ENCODE measurements at regions of chr1 and their contacts with region 1.

Region 1: DNA sequence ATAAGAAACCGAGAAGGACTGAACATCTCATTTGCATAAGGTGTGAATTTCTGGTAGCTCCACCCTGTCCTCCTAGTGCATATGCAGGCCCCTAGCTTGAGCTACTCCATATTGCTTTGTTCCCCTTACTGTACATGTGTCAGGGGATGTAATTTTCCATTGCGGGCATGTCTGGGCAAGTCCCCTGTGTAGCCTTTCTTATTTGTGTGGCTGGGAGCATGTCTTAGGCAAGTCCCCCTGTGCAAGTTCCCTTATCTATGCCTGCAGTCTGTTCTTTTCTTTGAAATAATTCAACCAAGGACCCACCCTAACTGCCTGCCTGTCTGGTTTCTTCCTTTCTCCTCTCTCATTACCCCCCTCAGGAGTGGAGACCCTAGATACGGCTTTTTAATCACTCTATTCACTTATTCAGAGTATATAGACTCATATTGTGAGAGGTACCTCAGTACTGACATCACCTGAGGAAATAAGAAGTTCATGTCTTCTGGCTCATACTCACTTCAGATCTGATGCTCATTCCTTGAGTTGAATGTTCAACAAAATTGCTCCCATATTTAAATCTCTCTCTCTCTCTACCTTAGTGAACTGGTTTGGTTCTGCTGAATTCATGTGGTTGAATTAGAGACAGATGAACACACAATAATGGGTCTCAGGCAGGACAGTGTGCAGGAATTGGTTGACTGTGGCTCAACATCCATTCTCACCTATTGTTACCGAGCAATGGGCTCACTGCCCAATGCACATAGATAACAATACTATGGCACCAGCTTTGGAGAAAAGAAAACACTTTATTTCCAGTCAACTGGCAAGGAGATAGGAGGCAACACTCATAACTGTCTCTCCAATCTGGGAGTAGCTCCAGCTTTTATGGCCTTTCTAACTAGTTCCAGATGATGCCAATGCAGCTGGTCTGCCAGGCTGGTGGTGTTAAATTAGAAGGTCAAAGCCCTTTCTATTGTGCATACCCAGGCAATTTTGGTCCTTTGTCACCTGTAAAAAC is 27.9 kb upstream of the NPL start:
- DNase-seq: no peak
- H3K4me3 ChIP-seq: no peak overlapping the region
- H3K27ac ChIP-seq: no peak overlapping the region
- H3K4me1 ChIP-seq: no peaks in the 10 kb centered on the region
- H3K27me3 ChIP-seq: no peaks in the 10 kb centered on the region
- CTCF ChIP-seq: no peak
- EP300 ChIP-seq: no peak
- POLR2A ChIP-seq: no peak

Region 2: GRCh38 chr1:182677397-182678098 is 84.1 kb before region 1 on chr1:
- in situ Hi-C with region 1: no loop called
- intact Hi-C with region 1: loop called (anchors 10 kb)
- DNase-seq: no peak
- H3K4me3 ChIP-seq: no peak overlapping the region
- H3K27ac ChIP-seq: no peak overlapping the region
- H3K4me1 ChIP-seq: peaks cover 0 to 8% (median 0%) of the 10 kb centered on the region in 4 donors
- H3K27me3 ChIP-seq: no peaks in the 10 kb centered on the region
- CTCF ChIP-seq: no peak
- EP300 ChIP-seq: no peak
- POLR2A ChIP-seq: no peak

Measured in transverse colon (tissue), 4 donors.